ENCODE measurements at regions of chrX and their contacts with region 1.

Region 1: GRCh38 chrX:135572436-135572835 is 52.0 kb downstream of the INTS6L start:
- DNase-seq: no peak
- H3K4me3 ChIP-seq: no peak overlapping the region
- H3K27ac ChIP-seq: no peak overlapping the region
- H3K4me1 ChIP-seq: no peaks in the 10 kb centered on the region
- H3K27me3 ChIP-seq: no peaks in the 10 kb centered on the region
- CTCF ChIP-seq: peak; percentile 3 to 13
- POLR2A ChIP-seq: no peak

Region 2: GRCh38 chrX:134670134-134670924 is 902.1 kb before region 1 on chrX:
- CTCF ChIA-PET with region 1: no interaction called
- POLR2A ChIA-PET with region 1: no interaction called
- dilution Hi-C with region 1: no loop called
- intact Hi-C with region 1: no loop called
- DNase-seq: peak; percentile 29
- H3K4me3 ChIP-seq: no peak overlapping the region
- H3K27ac ChIP-seq: peak overlapping the region; percentile 87
- H3K4me1 ChIP-seq: peaks cover 27% of the 10 kb centered on the region
- H3K27me3 ChIP-seq: no peaks in the 10 kb centered on the region
- CTCF ChIP-seq: no peak
- POLR2A ChIP-seq: no peak

Region 3: GRCh38 chrX:135505351-135505750 is 67.1 kb before region 1 on chrX:
- CTCF ChIA-PET with region 1: no interaction called
- POLR2A ChIA-PET with region 1: no interaction called
- dilution Hi-C with region 1: no loop called
- intact Hi-C with region 1: loop called (anchors 5 kb)
- DNase-seq: no peak
- H3K4me3 ChIP-seq: no peak overlapping the region
- H3K27ac ChIP-seq: no peak overlapping the region
- H3K4me1 ChIP-seq: no peaks in the 10 kb centered on the region
- H3K27me3 ChIP-seq: no peaks in the 10 kb centered on the region
- CTCF ChIP-seq: no peak
- POLR2A ChIP-seq: no peak